ENCODE measurements at regions of chr13 and their contacts with region 1.

Region 1: GRCh38 chr13:25286969-25287961 is at the start of gene MTMR6:
- DNase-seq: peak; percentile 95
- H3K4me3 Mint-ChIP-seq: peak within 1 kb of the TSS; percentile 93
- H3K27ac Mint-ChIP-seq: peak within 1 kb of the TSS; percentile 92
- H3K4me1 Mint-ChIP-seq: peaks cover 40% of the 10 kb centered on the region
- H3K27me3 Mint-ChIP-seq: peaks cover 3% of the 10 kb centered on the region
- total RNA-seq, gene MTMR6: 5.5 to 5.7 TPM

Region 2: GRCh38 chr13:24270639-24271141 is 1016.6 kb before region 1 on chr13:
- CTCF ChIA-PET with region 1: no interaction called
- intact Hi-C with region 1: loop called (anchors 5 kb)
- DNase-seq: peak; percentile 78
- H3K4me3 Mint-ChIP-seq: peak overlapping the region; percentile 91
- H3K27ac Mint-ChIP-seq: peak overlapping the region; percentile 98
- H3K4me1 Mint-ChIP-seq: peaks cover 75% of the 10 kb centered on the region
- H3K27me3 Mint-ChIP-seq: no peaks in the 10 kb centered on the region

Region 3: DNA sequence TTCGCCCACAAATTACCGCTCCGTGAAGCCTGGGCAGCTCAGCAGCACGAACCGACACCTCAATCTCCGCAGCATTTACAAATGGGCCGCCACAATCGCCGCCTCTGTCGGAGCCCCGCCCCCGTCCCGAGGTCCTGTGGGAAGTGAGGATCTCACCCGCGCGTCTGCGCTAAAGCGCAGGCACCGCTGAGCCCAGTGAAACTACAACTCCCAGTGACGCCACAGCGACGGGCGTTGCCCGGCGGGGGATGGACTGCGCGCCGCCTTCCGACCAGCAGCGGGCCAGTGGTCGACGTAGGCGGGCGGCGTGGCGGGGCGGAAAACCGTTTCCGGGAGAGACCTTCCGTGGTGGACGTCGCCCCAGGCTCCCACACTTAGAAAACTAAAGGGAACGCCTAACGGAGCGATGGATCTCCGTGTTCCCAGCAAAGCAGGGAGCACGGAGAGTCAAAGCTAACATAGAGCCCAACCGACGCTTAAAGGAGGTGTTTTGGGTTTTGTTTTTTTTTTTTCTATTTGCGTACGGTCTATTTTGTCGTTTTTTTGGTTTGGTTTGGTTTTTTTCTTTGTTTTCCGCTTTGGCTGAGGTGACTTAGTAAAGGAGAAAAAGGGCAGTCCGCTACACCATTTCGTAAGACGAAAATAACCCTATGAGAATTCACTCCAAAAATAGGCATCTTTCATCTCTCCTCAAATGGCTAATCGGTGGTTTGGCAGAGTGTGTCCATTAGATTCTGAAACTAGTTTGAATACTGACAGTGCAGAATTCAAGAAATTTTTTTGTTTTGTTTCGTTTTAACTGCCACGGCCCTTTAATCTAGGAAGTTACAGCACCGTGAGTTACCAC is 364.3 kb before region 1 on chr13:
- CTCF ChIA-PET with region 1: no interaction called
- intact Hi-C with region 1: loop called (anchors 2 kb)
- DNase-seq: peak; percentile 96
- H3K4me3 Mint-ChIP-seq: peak overlapping the region; percentile 94
- H3K27ac Mint-ChIP-seq: peak overlapping the region; percentile 85
- H3K4me1 Mint-ChIP-seq: peaks cover 8% of the 10 kb centered on the region
- H3K27me3 Mint-ChIP-seq: no peaks in the 10 kb centered on the region

Region 4: GRCh38 chr13:25214491-25215252 is 72.6 kb before region 1 on chr13:
- CTCF ChIA-PET with region 1: interaction called, 3 read pairs
- intact Hi-C with region 1: loop called (anchors 5 kb)
- DNase-seq: no peak
- H3K4me3 Mint-ChIP-seq: no peak overlapping the region
- H3K27ac Mint-ChIP-seq: no peak overlapping the region
- H3K4me1 Mint-ChIP-seq: no peaks in the 10 kb centered on the region
- H3K27me3 Mint-ChIP-seq: peaks cover 5% of the 10 kb centered on the region

Region 5: DNA sequence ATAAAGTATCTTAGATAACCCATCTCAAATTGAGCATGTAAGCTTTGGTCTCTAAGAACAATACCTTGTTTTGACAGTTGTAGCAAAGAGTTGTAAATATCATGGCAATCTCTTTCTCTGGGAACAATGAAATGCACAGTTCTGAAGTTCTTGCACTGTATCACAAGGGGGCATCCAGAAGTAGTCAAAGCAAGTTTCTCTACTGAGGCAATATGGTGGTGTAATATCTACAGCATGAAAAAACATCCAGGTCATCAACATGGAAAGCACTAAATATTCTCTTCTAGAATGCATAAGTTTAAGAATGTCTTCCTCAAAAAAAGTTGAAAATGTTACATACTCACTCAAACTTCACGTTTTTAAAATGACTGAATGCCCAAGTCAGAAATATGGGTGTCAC is 19.6 kb before region 1 on chr13:
- CTCF ChIA-PET with region 1: interaction called, 3 read pairs
- intact Hi-C with region 1: loop called (anchors 1 kb)
- DNase-seq: no peak
- H3K4me3 Mint-ChIP-seq: no peak overlapping the region
- H3K27ac Mint-ChIP-seq: no peak overlapping the region
- H3K4me1 Mint-ChIP-seq: peaks cover 6% of the 10 kb centered on the region
- H3K27me3 Mint-ChIP-seq: no peaks in the 10 kb centered on the region

Region 6: GRCh38 chr13:25874907-25875306 is 587.6 kb after region 1 on chr13:
- CTCF ChIA-PET with region 1: no interaction called
- intact Hi-C with region 1: loop called (anchors 10 kb)
- DNase-seq: peak; percentile 87
- H3K4me3 Mint-ChIP-seq: peak overlapping the region; percentile 40
- H3K27ac Mint-ChIP-seq: peak overlapping the region; percentile 87
- H3K4me1 Mint-ChIP-seq: peaks cover 70% of the 10 kb centered on the region
- H3K27me3 Mint-ChIP-seq: no peaks in the 10 kb centered on the region

Region 7: GRCh38 chr13:25943658-25944057 is 656.4 kb after region 1 on chr13:
- CTCF ChIA-PET with region 1: no interaction called
- intact Hi-C with region 1: no loop called
- DNase-seq: no peak
- H3K4me3 Mint-ChIP-seq: no peak overlapping the region
- H3K27ac Mint-ChIP-seq: no peak overlapping the region
- H3K4me1 Mint-ChIP-seq: peaks cover 14% of the 10 kb centered on the region
- H3K27me3 Mint-ChIP-seq: no peaks in the 10 kb centered on the region